ENCODE measurements at regions of chr11 and their contacts with region 1.

Region 1: DNA sequence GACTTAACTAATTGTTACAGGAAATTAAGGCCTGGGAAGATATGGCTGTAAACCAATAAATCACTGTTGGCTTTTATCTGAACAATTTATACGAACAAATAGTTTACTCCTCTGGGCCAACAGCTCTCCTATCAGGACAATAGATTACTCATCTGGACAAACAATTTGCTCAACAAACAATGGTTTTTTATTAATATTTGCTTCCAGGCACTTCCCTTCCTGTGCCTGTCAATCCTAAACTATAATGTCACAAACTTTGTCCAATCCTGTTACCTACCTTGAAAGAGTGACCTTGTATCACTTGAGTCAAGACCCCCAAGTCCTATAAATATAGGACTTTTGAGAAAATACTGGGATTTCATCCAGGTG is 87.6 kb upstream of the OR9Q1 start:
- DNase-seq: no peak
- ATAC-seq: peak in 7 of 8 donors; percentile 23 to 68 (median 58)
- H3K4me3 ChIP-seq: no peak overlapping the region
- H3K27ac ChIP-seq: peak overlapping the region in 5 of 10 donors; percentile 31 to 63 (median 59)
- H3K4me1 ChIP-seq: peaks cover 0 to 4% (median 0%) of the 10 kb centered on the region in 9 donors
- H3K27me3 ChIP-seq: no peaks in the 10 kb centered on the region
- CTCF ChIP-seq: no peak

Region 2: GRCh38 chr11:57873196-57873911 is 62.7 kb before region 1 on chr11:
- intact Hi-C with region 1: loop called in 1 of 10 experiments (anchors 10 kb)
- DNase-seq: no peak
- ATAC-seq: no peak
- H3K4me3 ChIP-seq: no peak overlapping the region
- H3K27ac ChIP-seq: no peak overlapping the region
- H3K4me1 ChIP-seq: no peaks in the 10 kb centered on the region
- H3K27me3 ChIP-seq: no peaks in the 10 kb centered on the region
- CTCF ChIP-seq: no peak

Region 3: DNA sequence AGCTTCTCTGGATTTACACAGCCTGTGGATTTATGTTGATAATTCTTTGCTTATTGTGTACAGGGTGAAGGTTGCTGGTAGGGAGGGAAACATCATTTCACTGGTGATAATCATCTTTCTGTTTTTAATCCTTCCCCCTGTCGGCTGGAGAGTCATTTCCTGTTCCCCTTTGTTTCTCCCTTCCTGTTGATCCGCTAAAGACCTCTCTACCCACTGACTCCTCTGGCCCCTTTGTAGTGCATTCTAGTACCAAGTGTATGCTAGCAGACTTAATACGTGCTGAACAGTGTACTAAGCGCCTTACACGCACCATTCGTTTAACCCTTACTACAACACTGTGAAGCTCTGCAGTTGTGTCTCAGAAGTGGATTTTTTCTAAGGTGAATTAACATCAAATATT is 68.6 kb after region 1 on chr11:
- intact Hi-C with region 1: loop called in 1 of 10 experiments (anchors 2 kb)
- DNase-seq: peak in 1 of 2 donors; percentile 39
- ATAC-seq: peak; percentile 81 to 94 (median 90)
- H3K4me3 ChIP-seq: no peak overlapping the region
- H3K27ac ChIP-seq: peak overlapping the region in 9 of 10 donors; percentile 7 to 89 (median 69)
- H3K4me1 ChIP-seq: peaks cover 0 to 36% (median 0%) of the 10 kb centered on the region in 9 donors
- H3K27me3 ChIP-seq: no peaks in the 10 kb centered on the region
- CTCF ChIP-seq: no peak

Region 4: DNA sequence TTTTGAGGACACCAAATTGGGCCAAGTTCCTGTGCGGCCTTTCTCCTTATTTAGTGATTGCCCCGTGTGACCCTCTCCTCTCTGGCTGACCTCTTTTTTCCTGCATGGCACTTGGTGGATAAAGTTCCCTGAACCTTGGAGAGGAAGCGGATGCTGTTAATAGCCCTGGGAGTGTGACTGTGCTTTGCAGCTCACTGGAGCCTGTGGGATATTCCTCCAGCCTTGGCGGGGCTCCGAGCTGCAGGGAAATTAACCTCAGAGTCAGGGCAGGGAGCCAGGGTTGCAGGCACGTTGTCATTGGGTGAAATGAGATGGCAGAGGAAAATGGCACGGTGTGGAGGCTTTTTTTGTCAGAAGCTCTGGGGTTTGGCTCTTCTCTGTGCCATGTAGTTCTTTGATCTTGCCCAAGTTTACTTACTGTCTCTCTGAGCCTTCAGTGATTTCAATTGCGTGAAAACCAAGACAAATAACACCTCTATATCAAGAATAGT is 88.6 kb after region 1 on chr11:
- intact Hi-C with region 1: loop called in 2 of 10 experiments (anchors 5 to 10 kb)
- DNase-seq: peak; percentile 85 to 89
- ATAC-seq: peak; percentile 92 to 98 (median 95)
- H3K4me3 ChIP-seq: no peak overlapping the region
- H3K27ac ChIP-seq: peak overlapping the region in 9 of 10 donors; percentile 21 to 93 (median 81)
- H3K4me1 ChIP-seq: peaks cover 0 to 64% (median 36%) of the 10 kb centered on the region in 9 donors
- H3K27me3 ChIP-seq: no peaks in the 10 kb centered on the region
- CTCF ChIP-seq: no peak

Region 5: DNA sequence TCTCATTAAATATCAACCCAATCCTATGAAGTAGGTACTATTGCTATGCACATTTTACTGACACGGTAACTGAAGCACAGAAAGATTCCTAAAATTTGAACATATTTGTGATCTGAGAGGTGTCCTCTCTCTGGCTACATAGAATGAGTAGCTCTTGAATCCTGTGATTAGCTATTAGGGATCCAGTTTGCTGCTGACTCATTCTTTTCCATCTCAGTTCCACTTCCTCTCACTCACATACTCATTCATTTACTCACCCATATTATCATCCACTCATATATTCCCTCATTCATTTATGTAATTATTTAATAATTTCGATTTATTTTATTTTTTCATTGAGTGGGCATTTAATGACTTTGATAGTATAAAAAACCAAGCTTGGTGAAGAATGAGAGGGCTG is 380.1 kb after region 1 on chr11:
- intact Hi-C with region 1: no loop called
- DNase-seq: no peak
- ATAC-seq: no peak
- H3K4me3 ChIP-seq: no peak overlapping the region
- H3K27ac ChIP-seq: no peak overlapping the region
- H3K4me1 ChIP-seq: no peaks in the 10 kb centered on the region
- H3K27me3 ChIP-seq: no peaks in the 10 kb centered on the region
- CTCF ChIP-seq: no peak